Esophagus muscularis mucosa (tissue), 4 donors: ENCODE measurements at regions of chr3 and their contacts with region 1.

Region 1: DNA sequence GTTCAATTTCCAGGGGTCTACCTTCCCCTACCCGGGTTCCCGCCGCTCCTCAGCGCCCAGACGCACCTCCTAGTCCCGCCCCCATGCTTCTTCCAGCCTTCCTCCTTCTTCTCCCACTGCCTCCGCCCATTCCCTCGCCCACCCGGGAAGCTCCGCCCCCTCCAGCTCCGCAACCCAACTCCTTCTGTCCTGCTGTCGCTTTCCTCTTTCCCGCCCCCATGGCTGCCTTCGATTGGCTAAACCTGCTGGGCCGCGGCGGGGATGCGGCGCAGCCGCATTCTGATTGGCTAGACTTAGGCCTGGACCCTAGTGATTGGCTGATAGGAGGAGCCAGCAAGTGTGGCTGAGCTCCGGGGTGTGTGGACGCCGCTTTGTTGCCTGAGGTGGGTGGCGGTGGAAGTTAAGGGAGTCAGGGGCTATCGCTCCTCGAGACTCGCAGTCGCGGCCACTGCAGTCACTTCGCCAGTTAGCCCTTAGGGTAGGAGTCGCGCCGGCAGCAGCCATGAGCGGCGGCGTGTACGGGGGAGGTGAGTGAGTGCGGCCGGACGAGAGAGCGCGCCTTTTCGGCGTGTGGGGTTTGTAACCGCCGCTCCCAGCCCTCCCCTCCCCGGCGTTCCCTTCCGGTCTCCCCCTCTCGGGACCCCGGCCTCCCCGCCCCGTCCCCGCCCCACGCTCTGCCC is at the start of gene ACTL6A:
- DNase-seq: peak; percentile 100
- H3K4me3 ChIP-seq: peak within 1 kb of the TSS; percentile 85 to 98 (median 86)
- H3K27ac ChIP-seq: peak within 1 kb of the TSS; percentile 84 to 92 (median 87)
- H3K4me1 ChIP-seq: peaks cover 6 to 24% (median 15%) of the 10 kb centered on the region in 4 donors
- H3K27me3 ChIP-seq: no peaks in the 10 kb centered on the region
- CTCF ChIP-seq: no peak
- EP300 ChIP-seq: no peak
- POLR2A ChIP-seq: no peak
- total RNA-seq, gene ACTL6A: 27.4 to 34.5 (median 34.1) TPM

Region 2: GRCh38 chr3:179347345-179348194 is 215.2 kb before region 1 on chr3 and contains the start of gene MFN1:
- intact Hi-C with region 1: loop called (anchors 10 kb)
- DNase-seq: peak; percentile 99
- H3K4me3 ChIP-seq: peak within 1 kb of the TSS; percentile 77 to 94 (median 88)
- H3K27ac ChIP-seq: peak within 1 kb of the TSS; percentile 88 to 91 (median 88)
- H3K4me1 ChIP-seq: peaks cover 13 to 24% (median 15%) of the 10 kb centered on the region in 4 donors
- H3K27me3 ChIP-seq: no peaks in the 10 kb centered on the region
- CTCF ChIP-seq: no peak
- EP300 ChIP-seq: no peak
- POLR2A ChIP-seq: no peak
- total RNA-seq, gene MFN1: 32.8 to 48.6 (median 37.3) TPM

Region 3: DNA sequence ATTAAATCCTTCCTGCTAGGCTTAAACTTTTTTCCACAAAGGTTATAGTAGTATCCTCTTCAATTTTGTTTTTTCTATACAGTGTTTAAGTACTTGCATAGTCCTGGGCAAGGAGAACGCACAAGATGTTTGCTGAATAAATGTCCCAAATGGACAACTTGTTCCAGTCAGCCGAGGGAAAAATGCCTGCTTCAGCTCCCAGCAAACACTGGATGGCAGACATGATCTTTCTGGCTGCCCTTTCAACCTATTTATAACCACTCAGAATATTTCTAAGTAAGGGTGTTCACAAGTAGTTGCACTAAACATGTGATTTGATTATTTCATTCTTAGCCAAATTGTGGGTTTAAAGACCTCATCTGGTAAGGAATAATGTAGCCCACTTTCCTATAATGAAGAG is 141.2 kb before region 1 on chr3:
- intact Hi-C with region 1: loop called (anchors 2 kb)
- DNase-seq: no peak
- H3K4me3 ChIP-seq: no peak overlapping the region
- H3K27ac ChIP-seq: peak overlapping the region in 3 of 4 donors; percentile 21 to 30 (median 23)
- H3K4me1 ChIP-seq: peaks cover 6 to 19% (median 12%) of the 10 kb centered on the region in 4 donors
- H3K27me3 ChIP-seq: no peaks in the 10 kb centered on the region
- CTCF ChIP-seq: peak; percentile 63 to 72 (median 65)
- EP300 ChIP-seq: no peak
- POLR2A ChIP-seq: no peak

Region 4: GRCh38 chr3:179446501-179446900 is 116.2 kb before region 1 on chr3:
- intact Hi-C with region 1: loop called (anchors 5 kb)
- DNase-seq: no peak
- H3K4me3 ChIP-seq: no peak overlapping the region
- H3K27ac ChIP-seq: peak overlapping the region; percentile 36 to 99 (median 96)
- H3K4me1 ChIP-seq: peaks cover 19 to 56% (median 47%) of the 10 kb centered on the region in 4 donors
- H3K27me3 ChIP-seq: no peaks in the 10 kb centered on the region
- CTCF ChIP-seq: peak; percentile 31 to 51 (median 43)
- EP300 ChIP-seq: no peak
- POLR2A ChIP-seq: no peak